ENCODE measurements at regions of chr9 and their contacts with region 1.

Region 1: DNA sequence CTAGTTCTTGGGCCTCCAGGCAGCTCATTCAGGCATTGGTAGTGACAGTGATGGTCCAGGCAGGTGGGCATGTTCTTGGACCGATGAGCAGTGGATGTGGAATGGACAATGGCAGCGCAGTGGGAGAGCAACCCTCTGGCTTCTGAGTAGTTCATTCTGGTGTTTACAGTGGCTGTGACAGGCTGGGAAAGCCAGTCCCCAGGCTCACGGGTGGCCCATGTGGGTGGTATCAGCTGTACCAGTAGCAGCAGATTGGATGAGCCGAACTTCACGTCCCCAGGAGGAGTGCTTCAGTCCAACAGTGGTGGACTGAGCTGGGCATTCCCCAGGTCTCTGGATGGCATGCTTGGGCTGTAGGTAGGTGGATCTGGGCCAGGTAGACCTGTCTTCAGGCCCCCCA is 515.6 kb upstream of the ACO1 start:
- DNase-seq: no peak
- H3K4me3 ChIP-seq: no peak overlapping the region
- H3K27ac ChIP-seq: no peak overlapping the region
- H3K4me1 ChIP-seq: no peaks in the 10 kb centered on the region
- H3K27me3 ChIP-seq: no peaks in the 10 kb centered on the region

Region 2: DNA sequence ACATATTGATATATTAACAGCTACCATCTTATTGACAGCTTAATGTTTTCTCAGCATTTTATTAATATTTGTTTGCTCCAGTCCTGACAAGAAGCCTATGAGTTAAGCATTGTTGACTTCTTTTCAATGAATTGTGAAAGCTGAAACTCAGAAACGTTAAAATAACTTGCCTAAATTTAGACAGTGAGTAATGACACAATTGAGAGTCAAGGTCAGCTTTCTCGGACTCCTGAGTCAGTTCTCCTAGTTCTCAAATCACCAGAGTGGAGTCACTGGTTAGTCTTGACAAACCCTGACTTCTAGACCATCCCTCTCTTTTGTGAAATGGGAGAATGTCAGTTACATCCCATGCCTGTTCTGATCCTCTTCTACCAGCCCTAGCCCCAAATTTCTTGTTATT is 292.9 kb after region 1 on chr9:
- in situ Hi-C with region 1: loop called (anchors 25 kb)
- DNase-seq: no peak
- H3K4me3 ChIP-seq: no peak overlapping the region
- H3K27ac ChIP-seq: no peak overlapping the region
- H3K4me1 ChIP-seq: no peaks in the 10 kb centered on the region
- H3K27me3 ChIP-seq: no peaks in the 10 kb centered on the region

Measured in GM23248 (cell line).